ENCODE measurements at regions of chr2 and their contacts with region 1.

Region 1: GRCh38 chr2:70104231-70105111 is 17.2 kb downstream of the PCBP1 start:
- DNase-seq: peak; percentile 59

Region 2: GRCh38 chr2:70116936-70117552 is 12.6 kb after region 1 on chr2:
- CTCF ChIA-PET with region 1: interaction called, 4 read pairs
- POLR2A ChIA-PET with region 1: interaction called, 13 read pairs
- DNase-seq: no peak

Region 3: DNA sequence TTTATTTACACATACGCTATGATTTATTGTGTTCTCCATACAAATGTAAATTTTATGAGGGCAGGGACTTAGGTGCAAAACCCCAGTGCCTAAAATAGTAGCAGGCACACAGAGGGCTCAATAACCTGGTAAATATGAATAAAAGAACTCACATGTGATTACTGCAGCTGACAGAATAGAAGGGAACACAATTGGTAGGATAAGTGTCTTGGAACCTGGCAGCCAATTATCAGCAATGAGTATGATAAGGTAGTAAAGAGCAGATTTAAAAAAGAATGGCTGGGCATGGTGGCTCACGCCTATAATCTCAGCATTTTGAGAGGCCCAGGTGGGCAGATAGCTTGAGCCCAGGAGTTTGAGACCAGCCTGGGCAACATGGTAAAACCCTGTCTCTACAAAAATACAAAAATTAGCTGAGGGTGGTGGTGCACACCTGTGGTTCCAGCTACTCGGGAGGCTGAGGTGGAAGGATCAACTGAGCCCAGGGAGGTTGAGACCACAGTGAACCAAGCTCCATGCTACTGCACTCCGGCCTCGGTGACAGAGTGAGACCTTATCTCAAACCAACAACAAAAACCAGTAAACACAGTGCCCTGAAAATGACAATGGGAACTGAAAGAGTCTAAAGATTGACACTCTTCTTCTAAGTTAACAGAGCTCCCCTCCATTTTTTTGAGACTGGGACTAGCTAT is 179.2 kb after region 1 on chr2:
- CTCF ChIA-PET with region 1: no interaction called
- POLR2A ChIA-PET with region 1: no interaction called
- DNase-seq: no peak

Measured in HEK293T (cell line).